ENCODE measurements at regions of chr7 and their contacts with region 1.

Region 1: DNA sequence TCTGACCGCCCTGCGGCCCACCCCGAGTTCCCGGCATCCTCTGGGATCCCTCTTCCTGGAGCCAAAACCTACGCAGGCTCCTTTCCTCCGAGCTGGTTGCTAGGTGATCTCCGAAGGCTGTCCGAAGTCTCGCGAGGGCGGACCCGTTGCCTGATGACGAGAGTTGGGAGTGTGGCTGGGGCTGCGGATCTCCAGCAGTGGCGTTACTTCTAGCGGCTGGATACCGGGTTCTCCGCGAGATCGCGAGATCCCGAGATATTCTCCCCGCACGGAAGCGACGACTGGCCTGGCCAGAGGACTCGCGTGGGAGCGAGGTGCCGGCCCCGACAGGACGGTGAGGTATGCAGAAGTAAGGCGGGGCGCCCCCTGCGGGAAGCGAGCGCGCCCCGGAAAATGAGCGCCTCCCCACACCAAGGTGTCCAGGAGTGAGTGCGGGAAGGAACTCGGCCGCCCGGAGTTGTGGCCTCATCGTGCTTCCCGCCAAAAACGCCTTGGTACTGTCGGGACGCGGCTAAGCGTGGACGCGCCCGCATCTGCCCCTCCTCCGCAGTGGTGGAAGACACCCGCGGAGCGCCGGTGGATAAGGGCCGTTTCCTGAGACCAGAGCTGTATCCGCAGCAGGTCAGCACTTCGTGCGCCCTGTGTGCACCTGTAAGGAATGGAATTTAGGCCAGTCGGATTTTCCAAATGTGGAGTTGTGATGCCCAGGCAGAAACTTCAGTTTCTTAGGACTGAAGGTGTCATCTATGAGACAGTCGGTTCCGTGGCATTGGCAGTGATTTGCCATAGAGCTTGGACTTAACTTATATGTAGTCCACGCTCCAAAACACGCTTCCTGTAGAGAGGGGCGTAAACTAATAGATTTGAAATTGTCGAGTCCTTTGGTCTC is at the start of gene AGBL3:
- DNase-seq: peak; percentile 86
- ATAC-seq: peak; percentile 89
- H3K4me3 Mint-ChIP-seq: peak within 1 kb of the TSS; percentile 99
- H3K27ac Mint-ChIP-seq: peak within 1 kb of the TSS; percentile 99
- H3K4me1 Mint-ChIP-seq: peaks cover 26% of the 10 kb centered on the region
- H3K27me3 Mint-ChIP-seq: no peaks in the 10 kb centered on the region
- CTCF ChIP-seq: peak; percentile 63
- total RNA-seq, gene AGBL3: 6.1 and 9.6 TPM in 2 replicates

Region 2: DNA sequence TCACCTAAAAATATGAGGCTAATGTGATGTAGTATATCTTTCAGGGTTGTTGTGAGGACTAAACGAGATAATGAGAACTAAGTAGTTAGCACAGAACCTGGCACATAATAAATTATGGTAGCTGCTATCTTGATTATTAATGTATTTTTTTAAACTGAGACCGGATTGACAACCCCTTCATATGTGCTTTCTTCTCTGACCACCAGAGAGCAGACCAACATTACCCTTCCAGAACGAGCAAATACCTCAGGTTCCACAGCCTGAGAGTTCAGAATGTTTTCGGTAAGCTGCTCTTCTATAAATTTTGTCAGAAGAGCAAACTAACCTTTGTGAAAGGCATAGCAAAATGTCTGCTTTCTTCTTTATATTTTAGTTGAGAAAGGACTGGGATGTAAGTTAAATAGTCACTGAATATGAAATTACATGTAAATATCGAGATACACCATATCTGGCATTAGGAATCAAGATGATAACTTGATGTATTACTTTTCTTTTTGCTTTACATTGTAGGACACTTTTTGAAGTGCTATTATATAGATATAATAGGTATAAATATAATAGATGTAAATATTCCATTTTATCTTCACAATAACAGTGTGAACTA is 353.6 kb before region 1 on chr7:
- CTCF ChIA-PET with region 1: interaction called, 23 read pairs
- POLR2A ChIA-PET with region 1: no interaction called
- intact Hi-C with region 1: no loop called
- DNase-seq: no peak
- ATAC-seq: peak; percentile 71
- H3K4me3 Mint-ChIP-seq: no peak overlapping the region
- H3K27ac Mint-ChIP-seq: no peak overlapping the region
- H3K4me1 Mint-ChIP-seq: peaks cover 10% of the 10 kb centered on the region
- H3K27me3 Mint-ChIP-seq: peaks cover 14% of the 10 kb centered on the region
- CTCF ChIP-seq: no peak

Region 3: GRCh38 chr7:134875867-134876266 is 110.7 kb before region 1 on chr7:
- CTCF ChIA-PET with region 1: no interaction called
- POLR2A ChIA-PET with region 1: no interaction called
- intact Hi-C with region 1: no loop called
- DNase-seq: no peak
- ATAC-seq: no peak
- H3K4me3 Mint-ChIP-seq: no peak overlapping the region
- H3K27ac Mint-ChIP-seq: no peak overlapping the region
- H3K4me1 Mint-ChIP-seq: no peaks in the 10 kb centered on the region
- H3K27me3 Mint-ChIP-seq: peaks cover 24% of the 10 kb centered on the region
- CTCF ChIP-seq: no peak

Region 4: GRCh38 chr7:135035252-135035651 is 48.6 kb after region 1 on chr7:
- CTCF ChIA-PET with region 1: no interaction called
- POLR2A ChIA-PET with region 1: no interaction called
- intact Hi-C with region 1: no loop called
- DNase-seq: no peak
- ATAC-seq: no peak
- H3K4me3 Mint-ChIP-seq: no peak overlapping the region
- H3K27ac Mint-ChIP-seq: no peak overlapping the region
- H3K4me1 Mint-ChIP-seq: no peaks in the 10 kb centered on the region
- H3K27me3 Mint-ChIP-seq: peaks cover 6% of the 10 kb centered on the region
- CTCF ChIP-seq: no peak

Region 5: DNA sequence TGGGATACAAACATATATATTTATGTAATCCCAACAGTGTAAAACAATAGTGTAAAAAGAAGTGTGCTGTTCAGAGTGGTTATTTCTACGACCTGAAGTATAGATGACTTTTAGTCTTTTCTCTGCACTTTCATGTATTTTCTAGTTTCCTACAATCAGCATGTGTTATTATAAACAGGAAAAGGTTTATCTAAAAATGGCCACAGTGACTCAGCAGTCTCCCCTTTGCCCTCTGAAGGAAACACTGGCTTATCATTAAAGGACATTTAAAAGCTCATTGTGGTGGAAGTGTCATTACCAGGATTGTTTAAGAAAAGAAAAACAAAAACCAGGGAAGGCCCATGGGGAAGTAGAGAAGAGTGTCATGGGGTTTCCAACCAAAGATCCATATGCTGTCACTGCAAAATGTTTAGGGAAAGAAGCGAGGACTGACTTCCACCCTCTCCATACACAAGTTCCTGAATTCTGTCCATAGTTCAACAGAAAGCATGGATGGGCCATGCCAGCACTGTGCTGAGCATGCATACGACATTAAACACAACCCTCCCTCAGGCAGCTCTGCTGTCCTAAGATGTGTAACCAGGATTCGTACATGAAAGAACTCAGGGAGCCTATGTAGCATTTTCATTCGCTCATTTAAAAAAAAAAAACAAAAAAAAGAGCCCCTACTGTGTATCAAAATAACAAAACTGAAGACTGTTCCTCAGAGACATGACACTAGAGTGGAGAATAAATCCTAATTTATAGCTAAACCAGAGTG is 173.7 kb after region 1 on chr7:
- CTCF ChIA-PET with region 1: interaction called, 8 read pairs
- POLR2A ChIA-PET with region 1: interaction called, 27 read pairs
- intact Hi-C with region 1: no loop called
- DNase-seq: no peak
- ATAC-seq: peak; percentile 20
- H3K4me3 Mint-ChIP-seq: peak overlapping the region; percentile 65
- H3K27ac Mint-ChIP-seq: peak overlapping the region; percentile 93
- H3K4me1 Mint-ChIP-seq: peaks cover 50% of the 10 kb centered on the region
- H3K27me3 Mint-ChIP-seq: no peaks in the 10 kb centered on the region
- CTCF ChIP-seq: no peak

Region 6: DNA sequence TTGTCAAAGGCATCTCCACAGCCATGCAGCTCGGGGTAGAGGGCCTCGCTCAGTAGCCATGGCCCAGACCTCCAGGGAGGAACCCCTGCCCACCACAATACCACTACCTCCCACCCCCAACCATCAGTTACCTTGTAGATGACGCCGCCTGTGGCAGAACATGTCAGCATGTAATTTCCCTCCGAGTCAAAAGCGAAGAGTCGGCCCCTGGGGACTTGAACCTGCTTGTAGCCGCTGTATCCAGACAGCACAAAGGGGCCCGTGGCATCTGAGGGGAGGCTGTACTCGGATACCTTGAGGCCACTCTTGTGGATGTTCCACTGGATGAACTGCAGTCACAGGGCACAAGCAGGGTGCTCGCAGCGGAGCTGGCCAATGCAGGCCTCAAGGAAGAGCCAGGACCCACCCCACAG is 200.2 kb after region 1 on chr7:
- CTCF ChIA-PET with region 1: interaction called, 7 read pairs
- POLR2A ChIA-PET with region 1: interaction called, 13 read pairs
- intact Hi-C with region 1: loop called (anchors 5 kb)
- DNase-seq: peak; percentile 60
- ATAC-seq: peak; percentile 76
- H3K4me3 Mint-ChIP-seq: peak overlapping the region; percentile 74
- H3K27ac Mint-ChIP-seq: peak overlapping the region; percentile 80
- H3K4me1 Mint-ChIP-seq: peaks cover 51% of the 10 kb centered on the region
- H3K27me3 Mint-ChIP-seq: no peaks in the 10 kb centered on the region
- CTCF ChIP-seq: no peak

Region 7: GRCh38 chr7:135274495-135275268 is 288.1 kb after region 1 on chr7:
- CTCF ChIA-PET with region 1: interaction called, 9 read pairs
- POLR2A ChIA-PET with region 1: no interaction called
- intact Hi-C with region 1: loop called (anchors 5 kb)
- DNase-seq: peak; percentile 49
- ATAC-seq: peak; percentile 96
- H3K4me3 Mint-ChIP-seq: no peak overlapping the region
- H3K27ac Mint-ChIP-seq: no peak overlapping the region
- H3K4me1 Mint-ChIP-seq: peaks cover 2% of the 10 kb centered on the region
- H3K27me3 Mint-ChIP-seq: peaks cover 6% of the 10 kb centered on the region
- CTCF ChIP-seq: peak; percentile 88

Region 8: DNA sequence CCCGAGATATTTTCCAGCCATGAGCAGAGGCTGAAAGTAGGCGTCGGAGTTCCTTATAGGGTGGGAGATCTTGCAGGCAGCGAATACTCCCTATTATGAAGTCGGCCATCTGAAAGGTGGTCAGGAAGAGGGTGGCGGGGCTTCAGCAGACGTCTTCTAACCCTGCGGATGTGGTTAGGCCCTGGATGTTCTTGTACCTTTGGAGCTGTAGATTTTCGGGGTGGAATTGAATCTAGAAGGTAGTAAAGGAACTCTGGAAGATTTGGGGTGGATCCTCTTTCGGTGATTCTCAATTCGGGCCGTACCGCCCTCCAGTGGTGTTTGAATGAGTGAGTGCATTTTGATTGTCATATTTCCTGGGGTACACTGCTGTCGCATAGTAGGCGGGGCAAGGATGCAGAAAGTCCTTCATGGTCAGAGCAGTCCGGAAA is 571.7 kb after region 1 on chr7:
- CTCF ChIA-PET with region 1: no interaction called
- POLR2A ChIA-PET with region 1: no interaction called
- intact Hi-C with region 1: loop called (anchors 5 kb)
- DNase-seq: peak; percentile 46
- ATAC-seq: peak; percentile 56
- H3K4me3 Mint-ChIP-seq: no peak overlapping the region
- H3K27ac Mint-ChIP-seq: no peak overlapping the region
- H3K4me1 Mint-ChIP-seq: peaks cover 16% of the 10 kb centered on the region
- H3K27me3 Mint-ChIP-seq: no peaks in the 10 kb centered on the region
- CTCF ChIP-seq: peak; percentile 29

Region 9: DNA sequence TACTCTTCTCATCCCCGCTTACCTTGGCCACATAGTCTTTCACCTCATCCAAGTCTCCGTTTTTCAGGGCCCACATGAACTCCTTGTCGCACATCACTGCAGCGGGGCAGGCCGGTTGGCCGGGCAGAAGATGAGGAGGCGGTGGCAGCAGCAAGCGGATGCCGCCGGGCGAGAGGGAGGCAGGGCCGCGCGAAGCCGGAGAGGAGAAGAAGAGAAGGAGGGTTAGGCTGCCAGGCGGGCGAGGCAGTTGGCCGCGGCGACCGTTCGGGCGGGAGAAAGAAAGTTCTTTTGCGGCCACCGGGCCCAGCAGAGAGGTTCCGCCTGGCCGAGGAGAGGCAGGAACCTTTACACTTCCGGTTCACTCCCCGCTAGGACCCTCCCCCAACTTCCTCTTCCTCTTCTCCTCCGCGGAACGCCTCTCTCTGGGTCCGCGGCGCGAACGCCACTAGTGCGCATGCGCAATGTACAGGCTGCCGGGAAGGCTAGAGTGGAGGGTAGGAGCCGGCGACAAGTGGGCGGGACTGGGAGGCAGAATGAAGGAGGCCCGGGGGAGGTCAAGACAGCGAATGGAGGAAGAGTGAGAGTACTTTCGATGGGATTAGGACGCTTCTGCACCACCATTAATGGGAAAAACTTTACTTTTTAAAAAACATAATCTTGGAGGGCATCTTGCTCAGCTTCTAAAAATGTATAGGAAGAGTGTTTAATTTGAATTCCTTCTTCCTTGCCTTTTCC is 990.6 kb after region 1 on chr7 and contains the start of gene MTPN:
- CTCF ChIA-PET with region 1: no interaction called
- POLR2A ChIA-PET with region 1: no interaction called
- intact Hi-C with region 1: loop called (anchors 5 kb)
- DNase-seq: peak; percentile 92
- ATAC-seq: peak; percentile 75
- H3K4me3 Mint-ChIP-seq: peak within 1 kb of the TSS; percentile 99
- H3K27ac Mint-ChIP-seq: peak within 1 kb of the TSS; percentile 99
- H3K4me1 Mint-ChIP-seq: peaks cover 89% of the 10 kb centered on the region
- H3K27me3 Mint-ChIP-seq: no peaks in the 10 kb centered on the region
- CTCF ChIP-seq: no peak
- total RNA-seq, gene MTPN: 130 and 137 TPM in 2 replicates